GM23248 (cell line): ENCODE measurements at regions of chr1 and their contacts with region 1.

Region 1: DNA sequence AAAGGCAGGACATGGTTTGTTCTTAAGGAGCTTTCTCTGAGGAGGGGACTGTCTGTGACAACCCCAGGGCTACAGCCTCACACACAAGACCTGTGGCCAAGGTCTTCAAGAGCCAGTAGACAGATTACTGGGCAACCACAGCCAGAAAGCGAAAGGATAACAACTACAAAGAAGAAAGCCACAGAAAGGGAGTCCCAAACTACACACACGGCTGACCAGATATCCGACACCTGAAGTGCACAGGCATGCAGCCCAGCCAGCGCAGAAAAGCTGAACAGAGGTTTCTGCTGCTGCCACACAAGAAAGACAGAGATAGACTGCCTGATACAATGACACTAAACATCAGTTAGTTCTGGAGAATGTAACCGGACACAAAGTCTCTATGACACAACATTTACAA is 21.4 kb upstream of the NADK start:
- DNase-seq: no peak
- H3K4me3 ChIP-seq: no peak overlapping the region
- H3K27ac ChIP-seq: no peak overlapping the region
- H3K4me1 ChIP-seq: no peaks in the 10 kb centered on the region
- H3K27me3 ChIP-seq: no peaks in the 10 kb centered on the region

Region 2: DNA sequence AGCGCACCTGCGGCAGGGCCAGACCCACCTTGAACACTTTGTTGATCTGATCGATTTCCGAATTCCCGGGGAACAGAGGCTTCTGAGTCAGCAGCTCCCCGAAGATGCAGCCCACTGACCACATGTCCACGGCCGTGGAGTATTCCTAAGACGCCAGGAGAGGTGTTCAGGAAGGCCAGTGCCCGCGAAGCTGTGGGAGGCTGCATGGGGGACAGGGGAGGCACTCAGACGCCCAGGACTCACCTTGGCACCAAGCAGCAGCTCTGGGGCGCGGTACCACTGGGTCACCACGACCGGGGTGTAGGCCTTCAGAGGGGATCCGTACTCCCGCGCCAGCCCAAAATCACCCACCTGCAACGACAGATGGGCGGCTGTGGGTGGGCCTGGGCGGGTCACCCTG is 95.9 kb before region 1 on chr1:
- in situ Hi-C with region 1: no loop called
- DNase-seq: no peak
- H3K4me3 ChIP-seq: no peak overlapping the region
- H3K27ac ChIP-seq: no peak overlapping the region
- H3K4me1 ChIP-seq: no peaks in the 10 kb centered on the region
- H3K27me3 ChIP-seq: no peaks in the 10 kb centered on the region

Region 3: GRCh38 chr1:1906185-1907097 is 106.7 kb after region 1 on chr1:
- in situ Hi-C with region 1: loop called (anchors 10 kb)
- DNase-seq: peak; percentile 89
- H3K4me3 ChIP-seq: no peak overlapping the region
- H3K27ac ChIP-seq: peak overlapping the region; percentile 16; the same call in 1 of the 2 replicates
- H3K4me1 ChIP-seq: peaks cover 5% of the 10 kb centered on the region; the same call in 1 of the 2 replicates
- H3K27me3 ChIP-seq: no peaks in the 10 kb centered on the region

Region 4: DNA sequence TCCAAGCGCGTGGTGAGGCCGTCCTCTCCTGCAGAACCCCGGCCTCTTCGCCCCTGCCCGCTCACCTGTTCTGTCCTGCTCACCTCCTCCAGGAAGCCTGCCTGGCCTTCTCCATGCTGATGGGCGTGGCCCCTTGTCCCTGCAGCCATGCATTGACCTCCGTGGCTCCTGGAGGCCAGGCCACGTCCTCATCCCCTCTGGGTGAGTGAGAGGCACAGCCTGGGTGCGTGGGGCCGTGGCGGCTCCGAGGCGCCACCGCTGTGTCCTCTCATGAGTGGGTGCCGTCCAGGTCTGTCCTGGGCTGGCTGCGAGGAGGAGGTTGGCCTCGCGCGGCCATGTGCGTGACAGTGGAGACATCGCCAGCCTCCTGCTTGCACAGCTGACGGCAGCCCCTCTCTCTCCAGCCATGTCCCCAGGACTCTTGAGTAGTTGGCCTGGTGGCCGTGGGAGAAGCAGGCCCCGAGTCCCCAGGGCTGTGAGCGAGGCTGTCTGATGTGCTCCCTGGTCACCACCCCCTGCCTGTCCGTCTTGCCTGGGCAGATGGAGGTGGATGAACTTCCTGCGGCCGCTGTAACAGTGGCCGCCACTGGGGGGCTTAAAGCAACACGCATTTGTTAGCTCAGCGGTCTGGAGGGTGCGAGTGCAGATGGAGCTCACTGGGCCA is 308.6 kb after region 1 on chr1:
- in situ Hi-C with region 1: no loop called
- DNase-seq: peak; percentile 58
- H3K4me3 ChIP-seq: no peak overlapping the region
- H3K27ac ChIP-seq: no peak overlapping the region
- H3K4me1 ChIP-seq: no peaks in the 10 kb centered on the region
- H3K27me3 ChIP-seq: no peaks in the 10 kb centered on the region